ENCODE measurements at regions of chr1 and their contacts with region 1.

Region 1: GRCh38 chr1:171081314-171081753 is 9.4 kb upstream of the FMO3 start:
- DNase-seq: no peak
- ATAC-seq: no peak
- H3K4me3 Mint-ChIP-seq: no peak overlapping the region
- H3K27ac Mint-ChIP-seq: no peak overlapping the region
- H3K4me1 Mint-ChIP-seq: no peaks in the 10 kb centered on the region
- H3K27me3 Mint-ChIP-seq: no peaks in the 10 kb centered on the region
- CTCF ChIP-seq: no peak

Region 2: GRCh38 chr1:171226747-171227370 is 145.5 kb after region 1 on chr1:
- CTCF ChIA-PET with region 1: interaction called, 5 read pairs
- POLR2A ChIA-PET with region 1: no interaction called
- intact Hi-C with region 1: loop called (anchors 1 kb)
- DNase-seq: no peak
- ATAC-seq: peak; percentile 52
- H3K4me3 Mint-ChIP-seq: no peak overlapping the region
- H3K27ac Mint-ChIP-seq: no peak overlapping the region
- H3K4me1 Mint-ChIP-seq: no peaks in the 10 kb centered on the region
- H3K27me3 Mint-ChIP-seq: no peaks in the 10 kb centered on the region
- CTCF ChIP-seq: no peak